ENCODE measurements at regions of chr6 and their contacts with region 1.

Region 1: GRCh38 chr6:110981202-110981600 is 637 bp upstream of the RPF2 start:
- DNase-seq: no peak
- ATAC-seq: no peak
- H3K4me3 Mint-ChIP-seq: peak overlapping the region; percentile 95
- H3K27ac Mint-ChIP-seq: peak overlapping the region; percentile 95
- H3K4me1 Mint-ChIP-seq: peaks cover 17% of the 10 kb centered on the region
- H3K27me3 Mint-ChIP-seq: peaks cover 2% of the 10 kb centered on the region; the same call in 1 of the 2 replicates
- CTCF ChIP-seq: no peak

Region 2: DNA sequence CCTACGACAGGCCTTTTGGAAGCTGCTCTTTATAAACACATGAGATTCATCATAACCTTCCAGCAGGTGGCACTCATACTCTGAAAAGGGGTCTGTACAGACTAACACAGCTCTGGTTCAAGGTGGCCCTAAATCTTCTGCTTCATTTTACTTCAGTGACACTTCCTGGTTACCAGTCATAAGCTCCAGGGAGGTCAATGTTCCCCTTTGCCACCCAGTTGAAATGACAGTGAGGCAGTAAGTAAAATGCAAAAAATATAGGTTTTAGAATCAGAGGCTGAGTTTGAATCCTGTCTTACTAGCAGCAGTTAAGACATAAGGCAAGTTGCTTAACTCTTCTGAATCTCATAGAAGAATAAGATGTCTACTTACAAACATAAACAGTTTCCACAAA is 298.7 kb before region 1 on chr6:
- CTCF ChIA-PET with region 1: interaction called, 11 read pairs
- POLR2A ChIA-PET with region 1: no interaction called
- DNase-seq: peak; percentile 23
- ATAC-seq: peak; percentile 88
- H3K4me3 Mint-ChIP-seq: no peak overlapping the region
- H3K27ac Mint-ChIP-seq: no peak overlapping the region
- H3K4me1 Mint-ChIP-seq: peaks cover 2% of the 10 kb centered on the region; the same call in 1 of the 2 replicates
- H3K27me3 Mint-ChIP-seq: no peaks in the 10 kb centered on the region
- CTCF ChIP-seq: peak; percentile 63

Region 3: GRCh38 chr6:110930781-110931180 is 50.4 kb before region 1 on chr6:
- CTCF ChIA-PET with region 1: no interaction called
- POLR2A ChIA-PET with region 1: no interaction called
- DNase-seq: no peak
- ATAC-seq: no peak
- H3K4me3 Mint-ChIP-seq: no peak overlapping the region
- H3K27ac Mint-ChIP-seq: no peak overlapping the region
- H3K4me1 Mint-ChIP-seq: no peaks in the 10 kb centered on the region
- H3K27me3 Mint-ChIP-seq: no peaks in the 10 kb centered on the region; the same call in 1 of the 2 replicates
- CTCF ChIP-seq: no peak

Region 4: GRCh38 chr6:110958329-110959192 is 22.6 kb before region 1 on chr6 and contains the start of gene GTF3C6:
- CTCF ChIA-PET with region 1: no interaction called
- POLR2A ChIA-PET with region 1: interaction called, 11 read pairs
- DNase-seq: peak; percentile 91
- ATAC-seq: peak; percentile 98
- H3K4me3 Mint-ChIP-seq: peak within 1 kb of the TSS; percentile 96
- H3K27ac Mint-ChIP-seq: peak within 1 kb of the TSS; percentile 99
- H3K4me1 Mint-ChIP-seq: peaks cover 6% of the 10 kb centered on the region
- H3K27me3 Mint-ChIP-seq: no peaks in the 10 kb centered on the region
- CTCF ChIP-seq: no peak
- total RNA-seq, gene GTF3C6: 65.5 to 69.0 TPM (median 67.0 TPM) in 3 replicates